ENCODE measurements at regions of chr2 and their contacts with region 1.

Region 1: GRCh38 chr2:230751062-230751461 is 38.4 kb downstream of the CAB39 start:
- DNase-seq: no peak
- ATAC-seq: peak; percentile 38
- H3K4me3 ChIP-seq: no peak overlapping the region
- H3K4me3 Mint-ChIP-seq: peak overlapping the region in 2 of 10 donors; percentile 6 to 26
- H3K27ac ChIP-seq: no peak overlapping the region
- H3K27ac Mint-ChIP-seq: peak overlapping the region in 4 of 9 donors; percentile 14 to 64 (median 34)
- H3K4me1 ChIP-seq: peaks cover 14 to 28% of the 10 kb centered on the region in 2 donors
- H3K4me1 Mint-ChIP-seq: peaks cover 53 to 97% (median 90%) of the 10 kb centered on the region in 7 donors
- H3K27me3 ChIP-seq: no peaks in the 10 kb centered on the region
- H3K27me3 Mint-ChIP-seq: no peaks in the 10 kb centered on the region

Region 2: GRCh38 chr2:230732914-230733401 is 18.1 kb before region 1 on chr2:
- CTCF ChIA-PET with region 1: interaction called, 5 read pairs
- POLR2A ChIA-PET with region 1: interaction called, 4 read pairs
- intact Hi-C with region 1: loop called in 1 of 2 experiments (anchors 2 kb)
- DNase-seq: no peak
- ATAC-seq: no peak
- H3K4me3 ChIP-seq: no peak overlapping the region
- H3K4me3 Mint-ChIP-seq: peak overlapping the region in 8 of 10 donors; percentile 3 to 68 (median 57)
- H3K27ac ChIP-seq: no peak overlapping the region
- H3K27ac Mint-ChIP-seq: peak overlapping the region in 4 of 9 donors; percentile 8 to 53 (median 30)
- H3K4me1 ChIP-seq: peaks cover 26 to 43% of the 10 kb centered on the region in 2 donors
- H3K4me1 Mint-ChIP-seq: peaks cover 49 to 90% (median 77%) of the 10 kb centered on the region in 7 donors
- H3K27me3 ChIP-seq: no peaks in the 10 kb centered on the region
- H3K27me3 Mint-ChIP-seq: no peaks in the 10 kb centered on the region